ENCODE measurements at regions of chr6 and their contacts with region 1.

Region 1: DNA sequence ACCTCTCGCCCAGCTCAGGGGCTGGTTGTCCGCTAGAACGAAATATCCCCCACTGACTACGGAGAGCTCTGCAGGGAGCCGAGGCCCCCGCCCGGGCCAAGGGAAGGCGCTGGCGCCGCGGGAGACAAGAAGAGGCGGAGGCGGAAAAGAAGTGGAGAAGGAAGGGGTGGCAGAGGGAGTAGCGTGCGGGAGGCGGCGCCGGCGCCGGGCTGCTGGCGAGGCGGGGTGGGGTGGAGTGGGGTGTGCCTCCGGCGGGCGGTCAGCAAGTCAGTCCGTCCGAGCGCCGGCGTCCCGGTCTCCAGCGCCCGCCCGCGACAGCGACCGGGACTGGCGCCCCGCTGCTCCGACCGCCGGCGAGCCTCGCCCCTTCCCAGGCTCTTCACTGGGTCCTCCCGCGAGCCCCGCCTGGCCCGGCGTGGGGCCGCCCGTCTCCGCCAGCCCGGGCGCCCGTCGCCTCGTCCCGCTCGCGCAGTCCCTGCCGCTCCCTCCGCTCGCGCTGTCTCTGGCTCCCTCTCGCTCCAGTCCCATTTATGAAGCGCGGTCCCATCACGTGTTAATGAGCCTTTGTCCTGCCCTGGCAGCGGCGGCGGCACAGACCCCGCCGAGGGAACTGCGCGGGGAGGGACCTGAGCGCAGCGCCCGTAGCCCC is at the start of gene CNR1:
- DNase-seq: peak; percentile 83
- H3K4me3 ChIP-seq: peak within 1 kb of the TSS; percentile 97
- H3K27ac ChIP-seq: peak within 1 kb of the TSS; percentile 80
- H3K4me1 ChIP-seq: peaks cover 45% of the 10 kb centered on the region
- CTCF ChIP-seq: peak; percentile 36; the same call in 1 of the 2 replicates
- total RNA-seq, gene CNR1: 109 and 150 TPM in 2 replicates

Region 2: GRCh38 chr6:87407901-87408720 is 757.9 kb before region 1 on chr6 and contains the start of gene CFAP206:
- CTCF ChIA-PET with region 1: no interaction called
- POLR2A ChIA-PET with region 1: no interaction called
- intact Hi-C with region 1: loop called (anchors 10 kb)
- DNase-seq: peak; percentile 90
- H3K4me3 ChIP-seq: peak within 1 kb of the TSS; percentile 85
- H3K27ac ChIP-seq: peak within 1 kb of the TSS; percentile 50
- H3K4me1 ChIP-seq: peaks cover 5% of the 10 kb centered on the region
- CTCF ChIP-seq: 0 out of 2 replicates have a peak, but pooled peaks have one; percentile 36
- total RNA-seq, gene CFAP206: 0.19 TPM in 1 of 2 replicates, not detected in the other

Region 3: GRCh38 chr6:87553159-87553765 is 612.7 kb before region 1 on chr6:
- CTCF ChIA-PET with region 1: no interaction called
- POLR2A ChIA-PET with region 1: no interaction called
- intact Hi-C with region 1: no loop called
- DNase-seq: no peak
- H3K4me3 ChIP-seq: no peak overlapping the region
- H3K27ac ChIP-seq: no peak overlapping the region
- H3K4me1 ChIP-seq: no peaks in the 10 kb centered on the region
- CTCF ChIP-seq: no peak

Region 4: GRCh38 chr6:87756858-87757257 is 409.1 kb before region 1 on chr6:
- CTCF ChIA-PET with region 1: no interaction called
- POLR2A ChIA-PET with region 1: interaction called, 5 read pairs
- intact Hi-C with region 1: loop called (anchors 5 kb)
- DNase-seq: peak; percentile 94
- H3K4me3 ChIP-seq: peak overlapping the region; percentile 23
- H3K27ac ChIP-seq: peak overlapping the region; percentile 78
- H3K4me1 ChIP-seq: peaks cover 49% of the 10 kb centered on the region
- CTCF ChIP-seq: no peak

Region 5: DNA sequence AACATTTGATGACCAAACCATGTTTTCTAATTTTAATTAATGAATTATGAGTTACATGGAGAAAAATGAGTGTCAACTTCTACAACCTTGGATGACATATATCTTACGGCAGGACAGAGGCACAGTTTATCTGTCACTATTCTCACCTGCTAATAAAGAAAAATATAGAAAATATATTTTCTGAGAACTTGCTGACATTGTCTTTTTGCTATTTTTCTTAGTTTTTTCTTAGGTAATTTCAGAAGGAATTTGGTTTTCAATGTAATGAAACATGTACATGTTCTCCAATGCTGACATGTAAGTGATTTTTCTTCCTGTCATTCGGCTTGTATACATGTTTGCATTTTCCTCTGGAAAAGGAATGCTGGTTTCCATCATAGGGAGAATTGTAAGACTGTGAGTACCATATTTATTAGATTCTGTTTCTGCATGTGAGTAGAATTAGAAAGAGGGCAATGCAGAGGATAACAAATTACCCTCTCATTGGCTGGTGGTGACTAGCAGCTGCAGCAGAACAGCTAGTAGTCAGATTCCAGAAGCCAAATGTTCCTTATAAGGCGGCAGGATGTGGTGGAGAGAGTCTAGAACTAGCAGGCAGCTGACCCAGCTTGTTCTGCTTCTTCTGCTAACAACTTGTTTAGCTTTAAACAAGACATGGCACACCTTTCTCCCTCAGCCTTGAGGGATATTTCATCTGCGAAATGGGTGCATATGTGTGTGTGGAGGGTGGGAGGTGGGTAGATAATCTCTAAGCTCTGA is 251.2 kb before region 1 on chr6:
- CTCF ChIA-PET with region 1: no interaction called
- POLR2A ChIA-PET with region 1: interaction called, 153 read pairs
- intact Hi-C with region 1: loop called (anchors 1 kb)
- DNase-seq: peak; percentile 58
- H3K4me3 ChIP-seq: no peak overlapping the region
- H3K27ac ChIP-seq: peak overlapping the region; percentile 99
- H3K4me1 ChIP-seq: peaks cover 95% of the 10 kb centered on the region
- CTCF ChIP-seq: no peak

Region 6: DNA sequence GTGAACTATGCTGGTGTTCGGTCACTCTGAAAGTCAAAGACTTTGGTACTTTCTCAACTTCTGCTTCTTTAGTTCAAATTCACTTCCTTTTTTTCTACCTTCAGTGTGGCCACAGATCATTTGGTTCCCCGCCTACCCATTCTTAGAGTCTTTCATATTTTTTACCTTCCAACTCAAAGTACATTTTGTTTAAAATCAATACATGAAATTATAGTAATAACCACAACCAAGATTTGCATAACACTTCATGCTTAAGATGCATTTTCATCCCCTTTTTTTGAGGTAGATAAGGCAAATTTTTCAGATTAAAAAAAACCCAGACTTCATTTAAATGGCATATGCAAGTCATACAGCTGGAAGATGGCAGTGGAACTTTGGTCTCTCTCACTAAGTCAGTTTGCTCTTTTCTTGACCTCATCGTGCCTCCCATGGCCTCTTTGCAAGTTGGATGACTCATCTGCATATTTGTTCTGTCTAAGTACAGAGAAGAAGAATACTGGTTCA is 12.0 kb after region 1 on chr6:
- CTCF ChIA-PET with region 1: interaction called, 3 read pairs
- POLR2A ChIA-PET with region 1: interaction called, 22 read pairs
- intact Hi-C with region 1: loop called (anchors 1 kb)
- DNase-seq: peak; percentile 91
- H3K4me3 ChIP-seq: peak overlapping the region; percentile 74
- H3K27ac ChIP-seq: peak overlapping the region; percentile 93
- H3K4me1 ChIP-seq: peaks cover 68% of the 10 kb centered on the region
- CTCF ChIP-seq: no peak

Region 7: GRCh38 chr6:88296694-88297093 is 130.7 kb after region 1 on chr6:
- CTCF ChIA-PET with region 1: no interaction called
- POLR2A ChIA-PET with region 1: no interaction called
- intact Hi-C with region 1: no loop called
- DNase-seq: no peak
- H3K4me3 ChIP-seq: no peak overlapping the region
- H3K27ac ChIP-seq: no peak overlapping the region
- H3K4me1 ChIP-seq: peaks cover 6% of the 10 kb centered on the region
- CTCF ChIP-seq: no peak

Region 8: GRCh38 chr6:89352278-89353117 is 1186.5 kb after region 1 on chr6 and contains the start of gene UBE2J1:
- CTCF ChIA-PET with region 1: no interaction called
- POLR2A ChIA-PET with region 1: no interaction called
- intact Hi-C with region 1: loop called (anchors 10 kb)
- DNase-seq: peak; percentile 86
- H3K4me3 ChIP-seq: peak within 1 kb of the TSS; percentile 78
- H3K27ac ChIP-seq: peak within 1 kb of the TSS; percentile 99
- H3K4me1 ChIP-seq: peaks cover 69% of the 10 kb centered on the region
- CTCF ChIP-seq: no peak
- total RNA-seq, gene UBE2J1: 117 and 123 TPM in 2 replicates

Measured in OCI-LY7 (cell line).